MCF 10A (cell line): ENCODE measurements at regions of chr1 and their contacts with region 1.

Region 1: DNA sequence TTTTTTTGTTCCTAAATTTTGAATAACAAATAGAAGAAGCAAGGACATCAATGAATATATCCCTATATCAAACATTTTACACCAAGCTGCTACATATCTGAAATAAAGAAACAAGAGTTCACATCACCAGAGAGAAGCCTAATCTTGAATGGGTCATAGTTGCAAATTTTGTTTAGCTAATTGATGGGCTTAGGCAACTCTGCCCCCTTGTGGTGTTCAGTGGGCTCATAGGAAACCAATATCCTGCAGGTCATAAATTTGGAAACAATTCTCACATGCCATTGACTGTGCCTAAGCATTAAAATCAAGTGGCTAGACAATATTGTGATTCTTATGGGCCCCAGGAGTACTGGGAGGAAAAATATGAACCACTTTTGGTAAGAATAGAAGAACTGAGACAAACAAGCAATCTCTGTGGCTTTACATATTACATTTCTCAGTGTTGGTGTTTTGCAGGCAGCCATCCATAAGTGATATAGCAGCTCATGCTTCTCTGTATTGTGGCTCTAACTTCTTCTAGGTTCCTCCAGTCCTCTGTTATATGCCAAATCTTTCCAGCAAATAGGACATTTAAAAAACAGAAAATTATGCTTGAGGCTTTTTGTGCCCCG is 1262.8 kb upstream of the PRMT6 start:
- DNase-seq: peak; percentile 64
- H3K4me3 Mint-ChIP-seq: no peak overlapping the region
- H3K27ac Mint-ChIP-seq: no peak overlapping the region
- H3K4me1 Mint-ChIP-seq: no peaks in the 10 kb centered on the region
- H3K27me3 Mint-ChIP-seq: peaks cover 12% of the 10 kb centered on the region
- CTCF ChIP-seq: peak; percentile 87

Region 2: GRCh38 chr1:104120525-104120924 is 1673.1 kb before region 1 on chr1:
- CTCF ChIA-PET with region 1: no interaction called
- POLR2A ChIA-PET with region 1: no interaction called
- intact Hi-C with region 1: loop called (anchors 5 kb)
- DNase-seq: no peak
- H3K4me3 Mint-ChIP-seq: no peak overlapping the region
- H3K27ac Mint-ChIP-seq: no peak overlapping the region
- H3K4me1 Mint-ChIP-seq: no peaks in the 10 kb centered on the region
- H3K27me3 Mint-ChIP-seq: peaks cover 26% of the 10 kb centered on the region
- CTCF ChIP-seq: peak; percentile 13

Region 3: GRCh38 chr1:104780470-104781078 is 1013.1 kb before region 1 on chr1:
- CTCF ChIA-PET with region 1: interaction called, 27 read pairs
- POLR2A ChIA-PET with region 1: no interaction called
- intact Hi-C with region 1: loop called (anchors 1 kb)
- DNase-seq: peak; percentile 45
- H3K4me3 Mint-ChIP-seq: no peak overlapping the region
- H3K27ac Mint-ChIP-seq: no peak overlapping the region
- H3K4me1 Mint-ChIP-seq: no peaks in the 10 kb centered on the region
- H3K27me3 Mint-ChIP-seq: no peaks in the 10 kb centered on the region
- CTCF ChIP-seq: peak; percentile 71

Region 4: DNA sequence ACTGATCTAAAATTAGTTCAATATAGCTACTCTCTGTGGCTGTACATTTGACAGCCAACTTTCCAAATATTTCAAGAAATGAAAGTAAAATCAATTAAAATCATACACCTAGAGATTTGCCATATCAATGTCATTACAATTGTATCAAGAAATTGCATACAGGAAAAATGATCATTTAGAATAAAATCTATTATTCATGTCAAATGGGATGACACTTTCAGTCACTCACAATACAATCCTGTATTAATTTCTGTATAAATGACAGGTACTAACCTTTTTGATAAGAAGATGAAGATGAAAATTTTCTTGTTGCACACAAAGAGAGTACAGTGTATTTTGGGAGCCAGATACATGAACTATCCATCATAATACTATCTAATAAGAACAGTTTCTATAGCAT is 326.1 kb before region 1 on chr1:
- CTCF ChIA-PET with region 1: no interaction called
- POLR2A ChIA-PET with region 1: no interaction called
- intact Hi-C with region 1: no loop called
- DNase-seq: no peak
- H3K4me3 Mint-ChIP-seq: no peak overlapping the region
- H3K27ac Mint-ChIP-seq: no peak overlapping the region
- H3K4me1 Mint-ChIP-seq: no peaks in the 10 kb centered on the region
- H3K27me3 Mint-ChIP-seq: no peaks in the 10 kb centered on the region
- CTCF ChIP-seq: no peak

Region 5: DNA sequence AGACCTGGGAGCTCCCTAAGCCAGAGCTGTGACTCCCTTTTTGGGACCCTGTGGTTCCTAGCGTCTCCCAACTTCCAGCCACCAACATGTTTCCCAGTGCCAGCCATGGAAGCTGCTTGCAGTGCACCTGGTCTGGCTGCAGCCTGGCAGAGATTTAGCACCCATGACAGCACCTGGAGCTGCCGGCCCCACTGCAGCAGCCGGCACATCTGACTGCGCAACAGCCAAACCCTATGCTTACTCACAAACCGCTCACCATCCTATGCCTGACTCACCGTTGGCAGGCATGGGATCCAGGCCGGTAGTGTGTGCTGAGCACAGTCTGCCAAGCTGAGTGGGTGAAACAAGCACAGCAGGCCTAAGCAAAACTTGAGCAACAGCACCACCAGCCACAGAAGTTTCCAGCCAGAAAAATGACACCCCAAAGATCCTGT is 826.9 kb after region 1 on chr1:
- CTCF ChIA-PET with region 1: no interaction called
- POLR2A ChIA-PET with region 1: no interaction called
- intact Hi-C with region 1: loop called (anchors 1 kb)
- DNase-seq: peak; percentile 97
- H3K4me3 Mint-ChIP-seq: no peak overlapping the region
- H3K27ac Mint-ChIP-seq: peak overlapping the region; percentile 47
- H3K4me1 Mint-ChIP-seq: peaks cover 12% of the 10 kb centered on the region
- H3K27me3 Mint-ChIP-seq: no peaks in the 10 kb centered on the region
- CTCF ChIP-seq: peak; percentile 20